ENCODE measurements at regions of chr4 and their contacts with region 1.

Region 1: GRCh38 chr4:163494360-163495162 is at the start of gene TMA16:
- DNase-seq: peak; percentile 96
- H3K4me3 ChIP-seq: peak within 1 kb of the TSS; percentile 90
- H3K27ac ChIP-seq: peak within 1 kb of the TSS; percentile 87
- H3K4me1 ChIP-seq: peaks cover 30% of the 10 kb centered on the region
- CTCF ChIP-seq: no peak
- total RNA-seq, gene TMA16: 56.9 and 83.9 TPM in 2 replicates

Region 2: DNA sequence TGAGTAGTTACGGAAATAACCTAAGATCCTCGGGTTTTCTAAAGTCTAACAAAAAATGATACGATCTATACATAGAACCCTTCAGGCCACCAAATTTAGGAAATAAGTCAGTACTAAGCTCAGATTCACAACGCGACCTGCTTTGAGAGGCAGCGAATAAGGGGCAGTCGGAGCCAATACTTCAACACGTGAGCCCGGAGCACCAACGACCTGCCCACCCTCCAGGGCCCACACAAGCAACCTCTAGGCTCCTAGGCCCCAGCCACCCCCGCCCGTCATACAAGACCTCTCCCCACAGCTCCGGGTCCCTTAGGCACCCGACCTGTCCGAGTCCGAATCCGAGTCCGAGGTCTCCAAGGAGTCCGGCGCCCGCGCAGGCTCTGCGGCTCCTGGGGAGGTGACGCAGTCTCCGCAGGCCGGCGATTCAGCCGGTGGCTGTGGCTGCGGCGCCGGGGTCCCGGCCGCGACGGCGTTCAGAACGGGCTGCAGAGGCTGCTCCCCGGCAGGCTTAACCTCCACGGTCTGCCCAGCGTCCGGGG is 328.5 kb before region 1 on chr4:
- CTCF ChIA-PET with region 1: no interaction called
- POLR2A ChIA-PET with region 1: no interaction called
- intact Hi-C with region 1: loop called (anchors 5 kb)
- DNase-seq: peak; percentile 64
- H3K4me3 ChIP-seq: peak overlapping the region; percentile 96
- H3K27ac ChIP-seq: peak overlapping the region; percentile 53
- H3K4me1 ChIP-seq: peaks cover 12% of the 10 kb centered on the region
- CTCF ChIP-seq: no peak

Region 3: GRCh38 chr4:163505374-163505773 is 10.8 kb after region 1 on chr4:
- CTCF ChIA-PET with region 1: interaction called, 3 read pairs
- POLR2A ChIA-PET with region 1: interaction called, 21 read pairs
- intact Hi-C with region 1: no loop called
- DNase-seq: no peak
- H3K4me3 ChIP-seq: no peak overlapping the region
- H3K27ac ChIP-seq: no peak overlapping the region
- H3K4me1 ChIP-seq: peaks cover 4% of the 10 kb centered on the region
- CTCF ChIP-seq: no peak

Region 4: DNA sequence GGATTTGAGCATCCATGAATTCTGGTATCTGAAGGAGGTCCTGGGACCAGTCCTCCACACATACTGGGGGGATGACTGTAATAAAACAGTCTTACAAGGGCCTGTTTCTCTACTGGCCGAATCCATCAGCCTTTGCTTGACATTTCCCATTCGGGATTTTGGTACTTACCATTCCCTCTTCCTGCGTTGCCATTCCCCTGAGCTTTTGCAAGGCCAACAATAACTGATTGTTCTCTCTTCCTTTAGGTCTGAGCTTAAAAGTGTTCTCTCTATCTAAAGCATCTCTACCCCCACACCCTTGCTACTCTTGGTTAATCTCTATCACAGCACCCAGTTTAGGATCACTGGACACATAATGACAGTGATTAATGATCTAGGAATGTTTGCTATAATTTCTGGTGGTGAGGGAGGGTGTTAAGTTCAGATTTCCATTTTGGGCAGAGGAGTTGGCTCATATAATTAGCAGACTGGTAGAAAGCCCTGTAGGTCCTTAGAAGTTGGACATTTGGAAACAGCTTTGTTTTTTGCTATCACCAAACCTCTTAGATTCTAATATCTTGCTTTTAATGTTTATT is 29.3 kb after region 1 on chr4:
- CTCF ChIA-PET with region 1: no interaction called
- POLR2A ChIA-PET with region 1: interaction called, 10 read pairs
- intact Hi-C with region 1: no loop called
- DNase-seq: no peak
- H3K4me3 ChIP-seq: no peak overlapping the region
- H3K27ac ChIP-seq: no peak overlapping the region
- H3K4me1 ChIP-seq: peaks cover 14% of the 10 kb centered on the region
- CTCF ChIP-seq: no peak

Region 5: GRCh38 chr4:163587867-163588266 is 93.3 kb after region 1 on chr4:
- CTCF ChIA-PET with region 1: no interaction called
- POLR2A ChIA-PET with region 1: interaction called, 3 read pairs
- intact Hi-C with region 1: loop called (anchors 2 kb)
- DNase-seq: peak; percentile 87
- H3K4me3 ChIP-seq: peak overlapping the region; percentile 17
- H3K27ac ChIP-seq: peak overlapping the region; percentile 64
- H3K4me1 ChIP-seq: peaks cover 58% of the 10 kb centered on the region
- CTCF ChIP-seq: peak; percentile 92

Region 6: DNA sequence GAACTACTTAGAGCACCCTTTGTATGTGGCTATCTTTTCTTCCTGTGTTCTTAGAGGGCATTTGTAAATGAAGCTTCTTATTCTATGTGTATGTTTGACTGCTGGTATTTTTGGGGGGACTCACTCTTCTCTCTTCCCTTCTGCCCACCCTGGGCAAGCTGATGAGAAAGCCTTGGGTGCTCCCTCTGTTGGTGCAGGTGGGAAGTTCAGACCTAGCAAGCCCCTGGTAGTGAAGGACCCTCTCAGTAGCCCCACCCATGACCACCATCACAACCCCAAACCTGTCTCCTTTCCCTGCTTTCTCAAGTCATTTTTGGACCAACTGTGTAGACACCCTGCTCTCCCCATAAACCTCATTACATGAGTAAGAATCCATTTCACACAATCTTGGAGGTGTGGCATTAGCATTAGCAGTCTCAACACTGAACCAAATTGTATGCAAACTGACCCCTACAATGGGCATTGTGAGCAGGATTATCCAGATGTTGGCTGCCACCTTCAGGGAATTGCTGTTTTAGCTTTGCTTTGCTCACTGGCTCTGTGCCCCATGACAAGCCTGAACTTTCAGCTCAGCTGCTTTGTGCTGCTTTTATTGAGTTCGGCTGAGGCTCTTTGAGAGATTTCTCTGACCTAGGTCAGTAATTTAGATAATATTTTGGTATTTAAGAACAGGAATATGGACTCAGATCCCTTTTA is 1455.0 kb after region 1 on chr4:
- CTCF ChIA-PET with region 1: no interaction called
- POLR2A ChIA-PET with region 1: no interaction called
- intact Hi-C with region 1: loop called (anchors 5 kb)
- DNase-seq: peak; percentile 44
- H3K4me3 ChIP-seq: peak overlapping the region; percentile 12
- H3K27ac ChIP-seq: peak overlapping the region; percentile 41
- H3K4me1 ChIP-seq: peaks cover 38% of the 10 kb centered on the region
- CTCF ChIP-seq: peak; percentile 72